CD8-positive, alpha-beta T cell (primary cell): ENCODE measurements at regions of chr12 and their contacts with region 1.

Region 1: DNA sequence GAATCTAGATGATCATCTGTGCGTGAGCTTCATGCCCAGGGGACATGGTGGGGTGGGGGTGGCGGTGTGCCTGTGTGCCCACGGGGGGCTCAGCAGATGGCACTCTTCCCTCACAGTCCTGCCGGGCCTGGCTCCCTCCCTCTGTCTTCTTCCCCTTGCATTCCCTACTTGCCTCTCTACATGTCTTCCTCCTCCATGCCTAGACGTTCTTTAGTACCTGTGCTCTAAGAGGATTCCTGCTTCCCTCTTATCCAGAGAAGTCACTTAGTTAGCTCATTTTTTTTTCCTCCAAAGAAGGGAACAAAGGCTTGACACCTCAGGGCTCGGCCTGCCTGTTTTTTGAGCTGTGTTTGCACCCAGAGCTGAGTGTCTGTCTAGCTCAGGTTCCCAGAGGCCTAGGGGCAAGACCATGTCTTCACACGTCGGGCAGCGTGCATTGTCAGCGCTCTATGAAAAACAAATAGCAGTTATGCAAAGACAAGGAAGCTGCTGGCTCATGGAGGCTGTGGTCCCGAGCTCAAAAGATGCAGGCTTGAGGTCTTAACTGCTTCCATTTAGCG is 48.8 kb downstream of the NINJ2 start:
- DNase-seq: peak in 8 of 9 experiments; percentile 15 to 60 (median 46)
- ATAC-seq: peak; percentile 41
- H3K4me3 ChIP-seq: no peak overlapping the region
- H3K4me3 Mint-ChIP-seq: no peak overlapping the region
- H3K27ac ChIP-seq: no peak overlapping the region
- H3K27ac Mint-ChIP-seq: no peak overlapping the region
- H3K4me1 ChIP-seq: peaks cover 19% of the 10 kb centered on the region
- H3K4me1 Mint-ChIP-seq: peaks cover 32% of the 10 kb centered on the region
- H3K27me3 ChIP-seq: no peaks in the 10 kb centered on the region
- H3K27me3 Mint-ChIP-seq: no peaks in the 10 kb centered on the region
- CTCF ChIP-seq: no peak

Region 2: DNA sequence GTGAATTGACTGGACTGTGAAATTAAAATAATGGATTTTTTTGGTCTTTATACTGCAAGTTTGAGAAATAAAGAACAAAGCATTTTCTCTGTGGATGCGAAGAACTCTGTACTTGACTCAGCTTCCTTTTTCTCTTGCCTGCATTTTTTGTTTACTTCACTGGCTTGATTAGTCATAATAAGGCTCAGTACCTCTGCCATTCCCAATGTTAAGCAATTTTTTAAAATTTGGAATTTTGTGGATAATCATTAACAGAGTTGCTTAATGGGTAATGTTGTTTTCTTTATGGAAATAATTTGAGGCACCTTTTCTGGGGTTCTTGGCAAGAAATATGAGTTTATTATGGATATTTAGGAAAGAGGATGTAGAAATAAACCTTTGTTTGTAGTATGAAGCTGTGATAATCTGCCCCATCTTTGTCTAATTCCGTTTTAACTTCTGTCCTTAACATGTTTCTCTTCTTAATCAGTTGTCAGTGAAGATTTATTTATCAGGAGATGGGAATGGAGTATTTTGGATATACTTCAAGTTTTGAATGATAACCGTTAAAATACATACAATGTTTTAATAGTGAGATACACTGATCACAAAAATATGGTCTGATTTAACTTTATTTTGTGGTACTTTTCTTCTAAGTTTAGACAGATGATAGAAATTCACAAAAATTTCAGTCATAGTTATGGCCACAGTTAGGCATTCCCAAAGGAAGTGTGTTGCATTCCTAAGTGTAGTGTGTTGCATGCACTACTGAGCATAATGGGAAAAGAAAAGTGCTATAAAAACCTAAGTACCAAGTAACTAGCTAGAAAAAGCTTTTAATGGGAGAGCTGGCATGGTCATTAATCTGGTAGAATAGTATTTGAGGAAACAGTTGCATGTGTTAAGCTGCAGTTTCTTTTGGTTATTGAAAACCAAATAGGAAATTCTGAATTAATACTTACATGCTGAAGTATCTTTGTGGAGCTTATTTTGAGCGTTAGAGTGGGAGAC is 165.5 kb after region 1 on chr12:
- CTCF ChIA-PET with region 1: interaction called, 11 read pairs
- POLR2A ChIA-PET with region 1: no interaction called
- intact Hi-C with region 1: no loop called
- DNase-seq: peak in 1 of 9 experiments; percentile 31
- ATAC-seq: peak; percentile 56
- H3K4me3 ChIP-seq: no peak overlapping the region
- H3K4me3 Mint-ChIP-seq: peak overlapping the region; percentile 70
- H3K27ac ChIP-seq: no peak overlapping the region
- H3K27ac Mint-ChIP-seq: peak overlapping the region; percentile 5
- H3K4me1 ChIP-seq: peaks cover 34% of the 10 kb centered on the region
- H3K4me1 Mint-ChIP-seq: peaks cover 70% of the 10 kb centered on the region
- H3K27me3 ChIP-seq: no peaks in the 10 kb centered on the region
- H3K27me3 Mint-ChIP-seq: no peaks in the 10 kb centered on the region
- CTCF ChIP-seq: no peak

Region 3: DNA sequence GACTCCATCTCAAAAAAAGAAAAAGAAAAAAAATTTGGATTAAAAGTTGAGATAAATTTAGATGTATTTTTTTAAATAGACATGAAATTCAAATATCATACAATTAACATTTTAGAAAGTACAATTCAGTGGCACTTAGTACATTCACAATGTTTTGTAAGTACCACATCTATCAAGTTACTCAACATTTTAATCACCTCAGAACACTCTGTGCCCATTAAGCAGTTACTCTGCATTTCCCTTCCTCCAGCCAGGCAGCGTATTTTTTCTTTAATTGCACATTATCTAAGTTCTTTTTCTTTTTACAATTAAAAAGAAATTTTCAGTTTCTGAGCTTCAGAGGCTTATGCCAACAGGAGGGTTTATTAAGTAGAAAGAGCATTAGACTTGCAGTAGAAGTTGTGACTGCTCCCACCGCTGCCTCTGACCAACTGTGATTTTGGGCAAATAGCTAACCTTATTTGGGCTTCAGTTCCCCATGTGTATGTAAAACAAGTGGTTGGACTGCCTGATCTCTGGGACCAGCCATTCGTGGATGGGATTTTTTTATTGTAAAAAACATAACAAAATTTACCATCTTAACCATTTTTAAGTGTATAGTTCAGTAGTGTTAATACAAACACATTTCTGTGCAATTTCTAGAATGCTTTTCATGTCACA is 203.6 kb after region 1 on chr12:
- CTCF ChIA-PET with region 1: interaction called, 88 read pairs
- POLR2A ChIA-PET with region 1: interaction called, 4 read pairs
- intact Hi-C with region 1: loop called (anchors 1 kb)
- DNase-seq: no peak
- ATAC-seq: no peak
- H3K4me3 ChIP-seq: no peak overlapping the region
- H3K4me3 Mint-ChIP-seq: no peak overlapping the region
- H3K27ac ChIP-seq: no peak overlapping the region
- H3K27ac Mint-ChIP-seq: no peak overlapping the region
- H3K4me1 ChIP-seq: no peaks in the 10 kb centered on the region
- H3K4me1 Mint-ChIP-seq: peaks cover 56% of the 10 kb centered on the region
- H3K27me3 ChIP-seq: no peaks in the 10 kb centered on the region
- H3K27me3 Mint-ChIP-seq: no peaks in the 10 kb centered on the region
- CTCF ChIP-seq: no peak